Common myeloid progenitor, CD34-positive (primary cell): ENCODE measurements at regions of chr1 and their contacts with region 1.

Region 1: DNA sequence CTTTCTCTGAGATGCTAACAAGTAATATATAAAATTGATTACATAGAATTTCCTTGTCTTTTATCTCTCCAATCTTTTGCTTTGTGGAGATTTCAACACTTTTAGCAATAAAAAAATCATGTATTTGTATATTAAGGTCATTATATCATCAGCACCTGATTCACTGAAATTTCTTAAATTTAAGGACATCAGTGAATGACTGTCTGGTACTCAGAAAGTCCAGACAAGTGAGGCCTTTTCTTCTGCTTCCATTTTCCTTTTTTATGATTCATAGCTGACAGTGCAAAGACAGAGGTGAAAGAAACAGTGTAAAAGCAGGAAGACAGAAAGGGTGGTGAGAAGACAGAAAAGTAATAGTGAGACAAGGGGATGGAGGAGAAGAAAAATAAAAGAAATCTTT is 54.6 kb downstream of the FASLG start:
- DNase-seq: no peak
- H3K4me3 ChIP-seq: no peak overlapping the region
- H3K27ac ChIP-seq: no peak overlapping the region
- H3K4me1 ChIP-seq: peaks cover 0 to 7% (median 0%) of the 10 kb centered on the region in 4 experiments
- H3K27me3 ChIP-seq: no peaks in the 10 kb centered on the region

Region 2: DNA sequence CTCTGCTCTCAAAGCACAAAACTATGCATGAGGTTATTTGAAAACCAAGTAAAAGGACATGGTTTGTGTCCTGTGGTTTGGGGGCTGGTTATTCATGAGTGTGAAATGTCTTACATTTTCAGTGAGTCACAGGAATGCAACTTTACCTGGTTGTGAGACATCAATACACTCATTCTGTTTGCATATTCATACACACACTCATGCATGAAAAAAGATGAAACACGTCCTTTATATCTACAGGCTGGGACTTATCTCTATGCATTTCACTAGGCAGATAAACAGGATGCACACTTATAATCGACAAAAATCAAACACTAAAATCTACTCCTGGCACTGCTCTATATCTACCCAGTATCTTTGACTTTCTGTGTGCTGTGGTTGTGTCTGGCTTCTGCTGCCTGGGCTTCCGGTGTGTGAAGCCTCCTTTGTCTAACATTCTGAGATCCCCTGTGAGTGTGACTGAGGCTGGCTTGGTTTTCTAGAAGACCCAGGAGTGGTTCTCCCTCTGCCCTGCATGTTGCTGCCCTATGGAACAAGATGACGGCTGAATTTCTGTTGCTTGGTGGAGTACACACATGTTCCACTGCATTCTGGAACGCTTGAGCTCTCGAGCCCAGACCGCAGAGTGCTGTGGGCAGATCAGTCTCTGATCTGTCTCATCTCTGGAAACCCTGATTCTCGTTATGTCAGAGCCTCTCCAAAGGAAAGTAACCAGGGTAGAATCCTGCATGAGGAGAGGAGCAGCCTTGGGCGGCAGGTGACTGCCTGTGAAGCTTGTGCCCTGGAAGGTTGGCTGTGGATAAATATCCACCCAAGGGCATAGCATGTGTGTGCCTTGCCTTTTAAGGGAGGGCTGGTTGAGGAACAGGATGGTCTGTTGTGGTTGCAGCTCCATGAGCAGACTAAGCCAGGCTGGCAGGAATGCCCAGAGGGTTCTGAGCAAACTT is 74.3 kb before region 1 on chr1:
- CTCF ChIA-PET with region 1: no interaction called
- POLR2A ChIA-PET with region 1: no interaction called
- DNase-seq: no peak
- H3K4me3 ChIP-seq: no peak overlapping the region
- H3K27ac ChIP-seq: no peak overlapping the region
- H3K4me1 ChIP-seq: peaks cover 0 to 26% (median 13%) of the 10 kb centered on the region in 4 experiments
- H3K27me3 ChIP-seq: no peaks in the 10 kb centered on the region

Region 3: GRCh38 chr1:172686143-172686542 is 27.3 kb before region 1 on chr1:
- CTCF ChIA-PET with region 1: no interaction called
- POLR2A ChIA-PET with region 1: no interaction called
- DNase-seq: no peak
- H3K4me3 ChIP-seq: no peak overlapping the region
- H3K27ac ChIP-seq: no peak overlapping the region
- H3K4me1 ChIP-seq: no peaks in the 10 kb centered on the region
- H3K27me3 ChIP-seq: no peaks in the 10 kb centered on the region

Region 4: GRCh38 chr1:172727956-172728603 is 14.6 kb after region 1 on chr1:
- CTCF ChIA-PET with region 1: interaction called, 10 read pairs
- POLR2A ChIA-PET with region 1: no interaction called
- DNase-seq: peak; percentile 50 to 80 (median 68)
- H3K4me3 ChIP-seq: no peak overlapping the region
- H3K27ac ChIP-seq: no peak overlapping the region
- H3K4me1 ChIP-seq: peaks cover 0 to 22% (median 18%) of the 10 kb centered on the region in 4 experiments
- H3K27me3 ChIP-seq: no peaks in the 10 kb centered on the region